ENCODE measurements at regions of chr10 and their contacts with region 1.

Region 1: DNA sequence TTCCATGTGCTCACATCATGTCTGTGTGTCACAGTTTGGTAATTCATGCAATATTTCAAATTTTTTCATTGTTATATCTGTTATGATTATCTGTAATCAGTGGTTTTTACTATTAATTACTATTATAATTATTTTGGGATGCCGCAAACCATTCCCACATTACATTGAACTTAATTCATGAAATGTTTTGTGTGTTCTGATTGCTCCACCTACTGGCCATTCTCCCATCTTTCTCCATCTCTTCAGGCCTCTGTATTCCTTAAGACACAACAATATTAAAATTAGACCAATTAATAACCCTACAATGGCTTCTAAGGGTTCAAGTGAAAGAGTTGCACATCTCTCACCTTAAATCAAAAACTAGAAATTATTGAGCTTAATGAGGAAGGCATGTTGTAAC is 398.5 kb downstream of the PCDH15 start:
- DNase-seq: no peak
- H3K4me3 ChIP-seq: no peak overlapping the region
- H3K27ac ChIP-seq: no peak overlapping the region
- H3K4me1 ChIP-seq: no peaks in the 10 kb centered on the region
- H3K27me3 ChIP-seq: no peaks in the 10 kb centered on the region
- CTCF ChIP-seq: peak in 3 of 6 experiments; percentile 28 to 51 (median 38)
- POLR2A ChIP-seq: no peak

Region 2: DNA sequence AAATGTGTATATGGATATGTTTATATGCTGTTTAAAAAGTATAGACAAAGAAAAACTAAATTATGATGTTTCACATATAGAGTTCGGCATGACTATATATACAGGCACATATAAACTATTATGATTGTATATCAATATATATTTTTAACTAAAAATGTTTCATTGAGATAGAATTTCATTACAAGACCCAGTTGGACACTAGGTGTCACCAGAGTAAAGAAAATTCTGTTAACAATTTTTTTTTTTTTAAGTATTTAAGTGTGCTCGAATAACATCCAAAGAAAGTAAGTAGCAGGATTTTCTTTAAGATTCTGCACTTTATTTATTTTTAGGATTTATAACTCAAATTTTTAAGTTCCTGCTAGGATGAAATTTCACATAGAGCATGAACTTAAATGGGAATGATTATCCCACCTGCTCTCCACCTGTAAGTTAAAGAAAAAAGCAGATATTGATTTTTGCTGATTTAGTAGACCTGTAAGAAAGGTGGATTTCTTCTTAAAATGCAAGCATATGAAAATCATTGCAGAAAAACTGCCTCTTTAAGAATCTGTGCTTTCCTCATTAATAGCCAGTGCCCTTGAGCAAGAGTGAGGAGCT is 563.0 kb before region 1 on chr10:
- intact Hi-C with region 1: loop called (anchors 10 kb)
- DNase-seq: no peak
- H3K4me3 ChIP-seq: no peak overlapping the region
- H3K27ac ChIP-seq: no peak overlapping the region
- H3K4me1 ChIP-seq: peaks cover 0 to 5% of the 10 kb centered on the region in 2 donors
- H3K27me3 ChIP-seq: no peaks in the 10 kb centered on the region
- CTCF ChIP-seq: peak; percentile 11 to 69 (median 52)
- POLR2A ChIP-seq: no peak